Common myeloid progenitor, CD34-positive (primary cell): ENCODE measurements at regions of chr11 and their contacts with region 1.

Region 1: GRCh38 chr11:47538741-47539574 is 14.0 kb downstream of the CELF1 start:
- DNase-seq: no peak
- H3K4me3 ChIP-seq: no peak overlapping the region
- H3K27ac ChIP-seq: no peak overlapping the region
- H3K4me1 ChIP-seq: peaks cover 0 to 22% (median 13%) of the 10 kb centered on the region in 4 experiments
- H3K27me3 ChIP-seq: no peaks in the 10 kb centered on the region

Region 2: DNA sequence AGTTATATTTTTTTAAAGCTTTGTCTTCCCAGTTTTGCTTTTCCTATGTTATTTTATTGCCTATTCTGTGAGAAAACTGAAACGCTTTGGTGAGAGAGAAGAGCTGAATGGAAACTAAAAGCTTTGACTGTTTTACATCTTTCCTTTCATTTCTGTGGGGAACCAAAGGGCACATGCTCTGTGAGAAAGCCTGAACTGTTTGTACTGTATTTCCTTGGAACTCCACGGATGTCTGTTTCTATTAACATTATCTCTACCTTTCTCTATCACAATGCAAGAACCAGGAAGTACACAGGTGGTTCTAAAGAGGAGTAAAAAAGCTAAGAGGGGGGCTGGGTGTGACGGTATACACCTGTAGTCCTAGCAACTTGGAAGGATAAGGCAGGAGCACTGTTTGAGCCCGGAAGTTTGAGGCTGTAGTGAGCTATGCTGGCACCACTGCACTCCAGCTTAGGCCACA is 29.9 kb before region 1 on chr11:
- CTCF ChIA-PET with region 1: interaction called, 13 read pairs
- POLR2A ChIA-PET with region 1: interaction called, 4 read pairs
- DNase-seq: no peak
- H3K4me3 ChIP-seq: no peak overlapping the region
- H3K27ac ChIP-seq: peak overlapping the region in 1 of 2 experiments; percentile 54
- H3K4me1 ChIP-seq: peaks cover 25 to 52% (median 40%) of the 10 kb centered on the region in 4 experiments
- H3K27me3 ChIP-seq: no peaks in the 10 kb centered on the region

Region 3: DNA sequence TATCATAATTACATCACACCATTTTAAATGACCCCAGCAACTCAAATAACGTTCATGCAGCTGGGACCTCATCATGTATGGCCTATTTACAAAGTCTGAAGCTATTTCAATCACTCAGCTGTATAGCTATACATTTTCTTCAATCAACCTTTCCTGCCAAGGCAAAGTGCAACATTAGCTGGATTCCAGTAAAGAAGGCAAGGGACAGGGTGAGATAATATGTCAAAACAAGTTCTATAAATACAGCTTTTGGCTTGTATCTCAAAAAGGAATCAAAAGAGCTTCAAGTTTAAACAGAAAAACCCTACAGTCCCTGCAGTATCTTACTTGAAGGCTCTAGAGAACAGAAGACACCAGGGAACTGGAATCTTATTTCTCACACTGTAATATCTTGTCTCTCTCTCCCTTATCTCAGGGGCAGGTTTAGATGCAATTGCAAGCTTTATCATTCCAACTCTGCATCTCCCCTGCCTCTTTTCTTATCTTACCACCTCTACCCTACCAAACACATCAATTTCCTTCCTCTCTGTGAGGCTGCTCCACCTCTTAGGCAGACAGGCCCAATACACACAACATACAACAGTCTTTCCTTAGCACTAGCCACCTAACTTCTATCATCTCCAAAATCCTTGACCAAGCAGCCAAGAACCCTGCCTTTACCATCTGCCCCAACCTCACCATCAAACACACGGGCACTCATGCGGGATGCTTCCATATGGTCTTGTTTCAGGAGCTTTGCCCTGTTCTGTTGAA is 20.6 kb before region 1 on chr11:
- CTCF ChIA-PET with region 1: interaction called, 20 read pairs
- POLR2A ChIA-PET with region 1: interaction called, 4 read pairs
- DNase-seq: peak; percentile 34 to 62 (median 46)
- H3K4me3 ChIP-seq: peak overlapping the region in 4 of 7 experiments; percentile 13 to 42 (median 34)
- H3K27ac ChIP-seq: peak overlapping the region; percentile 55 to 85
- H3K4me1 ChIP-seq: peaks cover 39 to 82% (median 62%) of the 10 kb centered on the region in 4 experiments
- H3K27me3 ChIP-seq: no peaks in the 10 kb centered on the region

Region 4: DNA sequence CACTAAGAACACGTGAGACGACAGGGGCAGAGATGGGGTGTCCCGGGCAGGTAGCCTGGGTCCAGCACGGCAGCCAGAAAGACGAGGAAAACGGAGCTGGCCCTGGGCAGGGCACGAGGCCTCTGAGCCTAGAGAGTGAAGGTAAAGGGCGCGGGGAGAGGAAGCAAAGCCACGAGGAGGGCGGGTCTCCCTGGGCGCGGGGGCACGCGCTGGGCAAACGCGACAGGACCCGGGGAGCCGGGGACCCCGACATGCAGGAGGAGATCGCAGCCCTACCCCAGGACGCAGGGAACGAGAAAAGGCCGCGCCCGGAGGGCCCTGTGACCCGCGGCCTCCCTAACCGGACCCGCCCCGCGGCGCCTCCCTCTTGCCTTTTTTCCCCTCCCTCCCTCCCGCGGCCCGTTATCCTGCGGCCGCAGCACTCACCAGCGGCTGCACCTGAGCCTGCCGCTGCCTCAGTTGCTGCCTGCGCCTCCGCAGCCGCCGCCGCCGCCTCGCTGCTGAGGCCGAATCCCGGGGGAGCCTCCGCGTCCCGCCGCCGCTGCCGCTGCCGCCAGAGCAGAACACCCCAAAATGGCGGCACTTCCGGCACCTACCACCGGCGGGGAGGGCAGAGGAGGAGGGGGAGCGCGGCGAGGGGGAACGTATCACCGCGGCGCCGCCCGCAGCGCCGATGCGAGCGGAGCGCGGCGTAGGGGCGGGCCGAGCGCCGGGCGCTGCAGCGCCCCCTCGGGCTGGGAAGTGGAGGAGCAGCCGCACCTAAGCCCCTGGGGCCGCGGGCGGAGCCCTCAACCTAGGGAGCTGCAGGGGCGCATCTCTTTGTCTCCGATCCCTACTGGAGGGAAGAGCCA is 13.8 kb after region 1 on chr11 and contains the start of gene CELF1:
- CTCF ChIA-PET with region 1: interaction called, 10 read pairs
- POLR2A ChIA-PET with region 1: interaction called, 5 read pairs
- DNase-seq: peak; percentile 93 to 96 (median 96)
- H3K4me3 ChIP-seq: peak within 1 kb of the TSS; percentile 72 to 97 (median 88)
- H3K27ac ChIP-seq: peak within 1 kb of the TSS; percentile 64 to 94
- H3K4me1 ChIP-seq: peaks cover 18 to 35% (median 31%) of the 10 kb centered on the region in 4 experiments
- H3K27me3 ChIP-seq: no peaks in the 10 kb centered on the region

Region 5: DNA sequence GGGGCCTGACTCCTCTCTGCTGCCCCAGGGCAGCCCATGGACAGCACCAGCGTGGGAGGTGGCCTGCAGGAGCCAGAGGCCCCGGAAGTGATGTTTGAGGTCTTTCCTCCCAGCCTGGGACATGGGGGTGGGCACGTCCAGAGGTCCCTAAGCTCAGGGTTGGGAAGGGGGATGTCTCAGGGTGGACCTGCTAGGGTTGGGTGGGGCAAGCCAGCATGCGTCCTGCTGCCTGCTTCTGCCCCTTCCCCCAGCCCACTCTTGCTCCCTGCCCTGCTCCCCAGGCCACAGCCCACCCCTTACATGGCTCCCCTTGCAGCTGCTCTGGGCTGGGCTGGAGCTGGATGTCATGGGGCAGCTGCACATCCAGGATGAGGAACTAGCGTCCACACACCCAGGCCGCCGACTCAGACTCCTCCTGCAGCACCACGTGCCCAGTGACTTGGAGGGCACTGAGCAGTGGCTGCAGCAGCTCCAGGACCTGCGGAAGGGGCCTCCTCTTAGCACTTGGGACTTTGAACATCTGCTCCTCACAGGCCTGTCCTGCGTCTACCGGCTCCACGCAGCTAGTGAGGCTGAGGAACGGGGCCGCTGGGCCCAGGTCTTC is 48.9 kb after region 1 on chr11:
- CTCF ChIA-PET with region 1: no interaction called
- POLR2A ChIA-PET with region 1: no interaction called
- DNase-seq: peak; percentile 53 to 88 (median 84)
- H3K4me3 ChIP-seq: peak overlapping the region in 5 of 7 experiments; percentile 32 to 68 (median 61)
- H3K27ac ChIP-seq: peak overlapping the region in 1 of 2 experiments; percentile 71
- H3K4me1 ChIP-seq: peaks cover 4 to 62% (median 60%) of the 10 kb centered on the region in 4 experiments
- H3K27me3 ChIP-seq: no peaks in the 10 kb centered on the region

Region 6: DNA sequence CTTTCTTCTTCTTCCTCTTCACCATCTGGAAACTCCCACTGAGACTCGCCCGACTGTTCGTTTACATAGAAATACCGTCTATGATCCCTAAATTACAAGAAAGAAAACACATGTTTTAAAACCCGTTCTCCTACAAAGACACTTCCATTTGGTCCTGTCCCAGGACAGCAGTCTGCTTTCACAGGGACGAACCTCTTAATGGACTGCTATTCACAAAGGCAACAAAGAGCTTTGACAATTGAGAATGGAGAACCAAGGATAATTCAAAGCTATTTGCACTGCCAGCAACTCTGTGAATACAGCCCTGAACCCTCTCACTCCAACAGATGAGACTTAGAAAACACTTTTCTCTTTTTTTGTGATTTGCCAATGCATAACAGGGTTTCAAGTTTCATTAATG is 192.5 kb after region 1 on chr11:
- CTCF ChIA-PET with region 1: no interaction called
- POLR2A ChIA-PET with region 1: no interaction called
- DNase-seq: no peak
- H3K4me3 ChIP-seq: no peak overlapping the region
- H3K27ac ChIP-seq: no peak overlapping the region
- H3K4me1 ChIP-seq: no peaks in the 10 kb centered on the region
- H3K27me3 ChIP-seq: no peaks in the 10 kb centered on the region